ENCODE measurements at regions of chr9 and their contacts with region 1.

Region 1: GRCh38 chr9:90102292-90102901 is 497.6 kb downstream of the GADD45G start:
- DNase-seq: peak; percentile 34 to 89
- ATAC-seq: peak; percentile 92 to 100 (median 100)
- H3K4me3 ChIP-seq: no peak overlapping the region
- H3K4me3 Mint-ChIP-seq: no peak overlapping the region
- H3K27ac ChIP-seq: no peak overlapping the region
- H3K27ac Mint-ChIP-seq: no peak overlapping the region
- H3K4me1 ChIP-seq: no peaks in the 10 kb centered on the region
- H3K4me1 Mint-ChIP-seq: peaks cover 0 to 5% of the 10 kb centered on the region in 2 donors
- H3K27me3 ChIP-seq: no peaks in the 10 kb centered on the region
- H3K27me3 Mint-ChIP-seq: no peaks in the 10 kb centered on the region
- CTCF ChIP-seq: peak; percentile 26

Region 2: GRCh38 chr9:89576404-89576839 is 526.0 kb before region 1 on chr9:
- intact Hi-C with region 1: loop called (anchors 1 kb)
- DNase-seq: peak in 1 of 2 donors; percentile 74
- ATAC-seq: no peak
- H3K4me3 ChIP-seq: no peak overlapping the region
- H3K4me3 Mint-ChIP-seq: no peak overlapping the region
- H3K27ac ChIP-seq: no peak overlapping the region
- H3K27ac Mint-ChIP-seq: no peak overlapping the region
- H3K4me1 ChIP-seq: peaks cover 18% of the 10 kb centered on the region
- H3K4me1 Mint-ChIP-seq: peaks cover 23 to 30% of the 10 kb centered on the region in 2 donors
- H3K27me3 ChIP-seq: no peaks in the 10 kb centered on the region
- H3K27me3 Mint-ChIP-seq: peaks cover 5 to 19% of the 10 kb centered on the region in 2 donors
- CTCF ChIP-seq: peak; percentile 86

Region 3: DNA sequence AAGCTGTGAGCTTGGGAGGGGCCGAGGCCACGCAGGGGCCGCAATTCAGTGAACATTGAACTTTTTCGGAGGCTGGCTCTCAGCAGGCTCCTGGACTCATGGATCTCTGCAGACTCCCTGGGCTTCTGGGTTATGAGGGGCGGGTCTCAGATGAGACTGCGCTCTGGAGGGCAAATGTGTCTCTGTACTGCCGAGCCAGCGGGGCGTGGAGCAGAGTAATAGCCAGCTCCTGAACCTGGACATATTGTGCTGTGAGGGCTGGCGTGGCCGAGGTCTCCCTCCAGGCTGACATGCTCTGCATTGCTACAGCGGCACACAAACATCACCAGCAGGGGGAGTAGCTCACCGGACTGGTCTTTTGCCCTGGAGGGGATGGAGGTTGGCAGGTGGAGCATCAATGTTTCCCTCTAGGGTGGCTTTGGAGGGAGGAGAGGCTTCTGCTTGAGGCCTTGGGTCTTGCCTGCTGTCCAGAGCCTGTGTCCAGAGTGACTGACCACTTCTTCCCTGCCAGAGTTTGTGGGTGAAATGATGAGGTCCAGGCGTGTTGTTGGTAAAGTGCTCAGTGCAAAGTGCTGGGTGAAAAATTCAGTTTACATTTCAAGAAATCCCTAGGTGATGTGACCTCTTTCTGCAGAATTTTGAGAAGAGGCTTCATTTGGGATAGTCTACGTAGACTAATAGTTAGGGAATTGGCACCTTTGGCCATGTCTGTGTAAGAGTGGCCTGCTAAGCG is 508.5 kb before region 1 on chr9:
- intact Hi-C with region 1: loop called (anchors 1 kb)
- DNase-seq: peak; percentile 36 to 76
- ATAC-seq: peak; percentile 50 to 80 (median 72)
- H3K4me3 ChIP-seq: no peak overlapping the region
- H3K4me3 Mint-ChIP-seq: no peak overlapping the region
- H3K27ac ChIP-seq: no peak overlapping the region
- H3K27ac Mint-ChIP-seq: peak overlapping the region in 1 of 2 donors; percentile 48
- H3K4me1 ChIP-seq: peaks cover 5% of the 10 kb centered on the region
- H3K4me1 Mint-ChIP-seq: peaks cover 15 to 18% of the 10 kb centered on the region in 2 donors
- H3K27me3 ChIP-seq: no peaks in the 10 kb centered on the region
- H3K27me3 Mint-ChIP-seq: peaks cover 0 to 6% of the 10 kb centered on the region in 2 donors
- CTCF ChIP-seq: peak; percentile 67

Region 4: DNA sequence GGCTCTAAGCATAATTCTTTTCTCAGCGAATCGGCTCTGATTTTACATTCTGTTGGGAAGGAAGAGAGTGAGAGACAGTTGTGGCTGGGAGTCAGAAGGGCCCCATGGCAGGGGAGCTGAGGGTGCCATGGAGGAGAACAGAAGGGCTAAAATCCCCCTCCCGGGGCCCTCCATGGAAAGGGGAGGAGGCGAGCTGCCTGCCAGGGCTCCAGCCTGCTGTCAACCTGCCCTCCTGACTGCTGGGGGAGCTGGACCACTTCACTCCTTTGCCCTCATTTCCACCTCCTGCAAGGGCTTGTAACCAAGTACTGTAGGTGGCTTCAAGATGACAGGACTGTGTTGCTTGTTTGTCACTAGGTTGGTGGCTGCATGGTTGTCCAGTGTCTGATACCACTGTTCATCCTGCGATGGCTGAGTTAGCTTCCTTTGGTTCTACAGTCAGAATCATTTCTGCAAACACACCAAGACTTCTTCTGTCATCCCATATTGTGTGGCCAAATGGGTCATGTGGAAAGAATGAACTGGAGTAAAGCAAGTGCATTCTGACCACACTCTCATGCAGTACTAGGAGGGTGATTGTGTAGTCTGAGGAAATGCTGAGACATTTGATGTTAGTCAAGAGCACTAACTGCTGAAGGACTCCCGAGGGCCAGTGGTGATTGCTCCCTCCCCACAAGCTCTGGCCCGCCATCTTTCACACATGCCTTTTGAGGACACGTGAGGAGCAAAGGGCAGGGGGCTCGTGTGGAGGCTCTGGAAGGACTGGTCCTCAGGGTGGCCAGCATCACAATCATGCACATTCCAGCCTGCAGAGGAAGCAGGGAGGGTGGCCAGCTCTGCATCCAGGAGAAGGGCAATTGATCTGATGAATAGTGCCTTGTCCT is 190.4 kb before region 1 on chr9:
- intact Hi-C with region 1: no loop called
- DNase-seq: no peak
- ATAC-seq: no peak
- H3K4me3 ChIP-seq: no peak overlapping the region
- H3K4me3 Mint-ChIP-seq: no peak overlapping the region
- H3K27ac ChIP-seq: no peak overlapping the region
- H3K27ac Mint-ChIP-seq: no peak overlapping the region
- H3K4me1 ChIP-seq: no peaks in the 10 kb centered on the region
- H3K4me1 Mint-ChIP-seq: no peaks in the 10 kb centered on the region
- H3K27me3 ChIP-seq: no peaks in the 10 kb centered on the region
- H3K27me3 Mint-ChIP-seq: peaks cover 13 to 27% of the 10 kb centered on the region in 2 donors
- CTCF ChIP-seq: no peak

Region 5: GRCh38 chr9:90086101-90086511 is 16.3 kb before region 1 on chr9:
- intact Hi-C with region 1: no loop called
- DNase-seq: no peak
- ATAC-seq: no peak
- H3K4me3 ChIP-seq: no peak overlapping the region
- H3K4me3 Mint-ChIP-seq: no peak overlapping the region
- H3K27ac ChIP-seq: no peak overlapping the region
- H3K27ac Mint-ChIP-seq: no peak overlapping the region
- H3K4me1 ChIP-seq: no peaks in the 10 kb centered on the region
- H3K4me1 Mint-ChIP-seq: no peaks in the 10 kb centered on the region
- H3K27me3 ChIP-seq: no peaks in the 10 kb centered on the region
- H3K27me3 Mint-ChIP-seq: peaks cover 20 to 24% of the 10 kb centered on the region in 2 donors
- CTCF ChIP-seq: no peak

Region 6: DNA sequence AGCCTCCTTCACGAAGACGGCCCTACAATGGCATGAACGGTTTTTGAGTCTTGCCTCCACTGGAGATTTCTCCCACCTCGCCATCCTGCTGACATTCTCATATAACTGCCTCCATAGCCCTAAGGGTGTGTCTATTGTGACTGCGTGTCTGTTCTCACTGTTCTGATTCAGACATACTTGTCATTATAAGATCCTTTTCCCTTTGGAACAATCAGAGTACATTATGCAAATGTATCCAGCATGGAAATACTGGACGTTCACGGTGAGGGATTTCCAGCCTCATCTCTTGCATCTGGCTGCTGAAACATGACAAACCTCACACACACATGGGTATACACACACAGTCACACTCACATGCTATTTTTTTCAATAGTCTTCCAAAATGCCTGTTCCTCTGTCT is 138.1 kb after region 1 on chr9:
- intact Hi-C with region 1: no loop called
- DNase-seq: no peak
- ATAC-seq: no peak
- H3K4me3 ChIP-seq: no peak overlapping the region
- H3K4me3 Mint-ChIP-seq: no peak overlapping the region
- H3K27ac ChIP-seq: no peak overlapping the region
- H3K27ac Mint-ChIP-seq: no peak overlapping the region
- H3K4me1 ChIP-seq: no peaks in the 10 kb centered on the region
- H3K4me1 Mint-ChIP-seq: no peaks in the 10 kb centered on the region
- H3K27me3 ChIP-seq: no peaks in the 10 kb centered on the region
- H3K27me3 Mint-ChIP-seq: peaks cover 3 to 35% of the 10 kb centered on the region in 2 donors
- CTCF ChIP-seq: no peak